IMR-90 (cell line): ENCODE measurements at regions of chrX and their contacts with region 1.

Region 1: GRCh38 chrX:19017271-19017670 is 33.4 kb upstream of the PHKA2 start:
- DNase-seq: peak; percentile 17
- ATAC-seq: peak; percentile 63
- H3K4me3 ChIP-seq: no peak overlapping the region
- H3K27ac ChIP-seq: no peak overlapping the region
- H3K4me1 ChIP-seq: no peaks in the 10 kb centered on the region
- H3K27me3 ChIP-seq: no peaks in the 10 kb centered on the region
- CTCF ChIP-seq: peak; percentile 51
- POLR2A ChIP-seq: no peak
- RAD21 ChIP-seq: peak; percentile 48

Region 2: DNA sequence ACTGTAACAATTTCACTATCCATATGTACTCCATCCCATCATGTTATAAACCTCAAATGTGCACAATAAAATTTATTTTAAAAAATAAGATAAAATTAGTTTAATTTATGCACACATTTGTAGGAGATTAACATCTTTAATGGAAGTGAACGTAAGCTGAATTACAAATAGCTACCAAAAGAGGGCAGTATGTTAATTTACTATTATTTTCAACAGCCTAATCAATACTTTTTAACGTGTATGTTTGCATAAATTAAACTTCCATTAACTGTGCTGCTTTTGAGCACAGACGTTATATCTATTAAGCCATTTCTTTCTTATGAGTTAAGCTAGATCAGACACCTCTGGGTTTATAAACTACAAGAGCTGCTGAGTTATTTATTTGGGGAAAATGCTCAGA is 23.1 kb after region 1 on chrX:
- CTCF ChIA-PET with region 1: interaction called, 10 read pairs
- POLR2A ChIA-PET with region 1: no interaction called
- dilution Hi-C with region 1: no loop called
- in situ Hi-C with region 1: no loop called
- intact Hi-C with region 1: no loop called
- DNase-seq: no peak
- ATAC-seq: no peak
- H3K4me3 ChIP-seq: no peak overlapping the region
- H3K27ac ChIP-seq: no peak overlapping the region
- H3K4me1 ChIP-seq: no peaks in the 10 kb centered on the region
- H3K27me3 ChIP-seq: no peaks in the 10 kb centered on the region
- CTCF ChIP-seq: peak; percentile 32
- POLR2A ChIP-seq: no peak
- RAD21 ChIP-seq: no peak